ENCODE measurements at regions of chr19 and their contacts with region 1.

Region 1: DNA sequence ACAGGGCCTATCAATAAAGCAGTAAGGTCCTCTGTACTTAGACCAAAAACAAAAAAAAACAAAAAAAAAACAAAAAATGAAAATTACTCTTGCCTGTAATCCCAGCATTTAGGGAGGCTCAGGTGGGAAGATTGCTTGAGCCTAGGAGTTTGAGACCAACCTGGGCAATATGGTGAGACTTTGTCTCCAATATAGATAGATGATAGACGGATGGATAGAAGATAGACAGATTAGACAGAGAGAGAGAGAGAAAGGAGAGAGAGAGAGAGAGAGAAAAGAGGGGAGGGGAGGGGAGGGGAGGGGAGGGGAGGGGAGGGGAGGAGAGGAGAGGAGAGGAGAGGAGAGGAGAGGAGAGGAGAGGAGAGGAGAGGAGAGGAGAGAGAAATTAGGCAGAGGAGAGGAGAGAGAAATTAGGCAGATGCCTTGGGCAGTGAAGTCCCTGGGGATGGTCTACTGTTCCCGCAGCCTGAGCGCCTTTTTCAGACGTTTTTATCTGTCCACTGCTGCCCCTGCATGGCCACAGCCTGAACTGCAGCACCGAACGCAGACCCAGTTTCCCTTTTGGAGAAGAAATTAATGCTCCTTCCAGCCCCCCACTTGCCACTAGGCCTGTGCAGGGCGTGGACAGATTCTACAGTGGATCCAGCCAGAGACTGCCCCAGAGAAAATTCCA is 9.8 kb upstream of the ZNF627 start:
- DNase-seq: peak; percentile 48 to 58
- ATAC-seq: peak; percentile 92 to 94
- H3K4me3 ChIP-seq: no peak overlapping the region
- H3K27ac ChIP-seq: no peak overlapping the region
- H3K4me1 ChIP-seq: 0 out of 3 replicates have a peak, but pooled peaks cover 4% of the 10 kb centered on the region
- CTCF ChIP-seq: peak; percentile 59
- EP300 ChIP-seq: no peak
- POLR2A ChIP-seq: no peak
- RAD21 ChIP-seq: peak; percentile 72 to 79

Region 2: DNA sequence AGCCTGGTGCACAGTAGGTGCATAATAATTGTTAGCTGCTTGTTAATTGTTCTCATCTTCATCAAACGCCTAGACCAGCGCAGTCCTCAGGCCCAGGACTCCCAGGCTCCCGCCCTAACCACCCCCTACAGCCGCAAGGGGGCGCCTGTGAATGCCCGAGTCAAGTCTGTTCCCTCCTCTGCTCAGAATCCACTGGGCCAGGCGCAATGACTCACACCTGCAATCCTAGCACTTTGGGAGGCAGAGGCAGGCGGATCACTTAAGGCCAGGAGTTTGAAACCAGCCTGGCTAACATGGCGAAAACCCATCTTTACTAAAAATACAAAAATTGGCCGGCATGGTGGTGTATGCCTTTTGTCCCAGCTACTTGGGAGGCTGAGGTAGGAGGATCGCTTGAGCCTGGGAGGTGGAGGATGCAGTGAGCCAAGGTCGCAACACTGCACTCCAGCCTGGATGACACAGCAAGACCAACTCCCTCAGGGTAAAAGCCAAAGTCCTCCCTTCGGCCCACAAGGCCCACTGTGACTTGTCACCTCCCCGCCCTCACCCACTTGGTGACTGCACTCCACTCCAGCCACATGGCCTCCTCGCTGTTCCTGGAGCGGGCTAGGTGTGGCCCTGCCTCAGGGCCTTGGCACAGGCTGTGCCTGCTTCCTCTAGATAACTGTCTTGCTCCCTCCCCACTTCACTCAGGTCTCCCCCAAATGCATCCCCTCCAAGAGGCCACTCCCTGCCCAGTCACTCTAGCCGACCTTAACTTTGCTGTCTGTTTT is 90.9 kb before region 1 on chr19:
- CTCF ChIA-PET with region 1: interaction called, 13 read pairs
- POLR2A ChIA-PET with region 1: no interaction called
- DNase-seq: peak; percentile 55 to 84
- ATAC-seq: peak; percentile 91 to 98
- H3K4me3 ChIP-seq: no peak overlapping the region
- H3K27ac ChIP-seq: peak overlapping the region in 1 of 2 experiments; percentile 58; a peak in 3 of 6 replicates
- H3K4me1 ChIP-seq: peaks cover 4% of the 10 kb centered on the region
- CTCF ChIP-seq: peak; percentile 56
- EP300 ChIP-seq: no peak
- POLR2A ChIP-seq: no peak
- RAD21 ChIP-seq: peak; percentile 50 to 56

Measured in A549 (cell line).